Activated CD4-positive, alpha-beta memory T cell treated with anti-CD3 and anti-CD28 coated beads, Interleukin-2, amount 10 ng/mL, durations not matched to agents 7 days and 5 days (primary cell): ENCODE measurements at regions of chr9 and their contacts with region 1.

Region 1: DNA sequence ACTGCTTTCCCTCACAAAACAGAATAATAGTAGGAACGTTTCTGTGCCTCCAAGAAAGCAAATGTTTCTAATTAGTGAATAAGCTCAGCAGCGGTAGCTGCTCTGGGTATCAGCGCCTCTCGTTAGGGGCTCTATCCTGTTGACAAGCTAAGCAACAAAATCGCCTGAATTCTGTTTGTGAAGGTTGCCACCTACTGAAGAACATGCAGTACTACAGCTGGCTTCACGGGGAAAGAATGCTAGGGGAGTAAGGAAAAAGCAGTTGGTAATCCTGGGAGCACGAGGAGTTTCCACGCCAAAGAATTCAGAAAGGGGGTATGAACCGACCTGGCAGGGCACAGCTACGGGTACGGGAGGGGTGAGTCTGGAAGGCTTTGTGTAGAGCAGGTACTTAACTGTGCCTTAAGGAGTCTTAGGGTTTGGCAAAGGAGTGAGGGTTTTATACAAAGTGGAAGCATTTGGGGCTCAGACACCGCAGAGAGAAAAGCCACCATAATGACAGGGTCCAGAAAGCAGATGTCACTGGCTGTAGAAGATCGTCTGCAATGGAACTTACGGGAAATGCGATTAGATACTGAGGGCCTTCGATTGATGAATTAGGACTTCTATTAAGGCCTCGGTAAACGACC is 171.7 kb downstream of the TTC39B start:
- DNase-seq: peak; percentile 39
- H3K4me3 Mint-ChIP-seq: no peak overlapping the region
- H3K27ac Mint-ChIP-seq: no peak overlapping the region
- H3K4me1 Mint-ChIP-seq: peaks cover 12% of the 10 kb centered on the region
- H3K27me3 Mint-ChIP-seq: no peaks in the 10 kb centered on the region

Region 2: GRCh38 chr9:15104826-15105420 is 30.4 kb before region 1 on chr9:
- CTCF ChIA-PET with region 1: interaction called, 52 read pairs
- POLR2A ChIA-PET with region 1: interaction called, 4 read pairs
- DNase-seq: peak; percentile 29
- H3K4me3 Mint-ChIP-seq: no peak overlapping the region
- H3K27ac Mint-ChIP-seq: no peak overlapping the region
- H3K4me1 Mint-ChIP-seq: no peaks in the 10 kb centered on the region
- H3K27me3 Mint-ChIP-seq: peaks cover 7% of the 10 kb centered on the region